HepG2 (cell line): ENCODE measurements at regions of chr18 and their contacts with region 1.

Region 1: GRCh38 chr18:61502472-61502871 is 169.2 kb downstream of the CDH20 start:
- DNase-seq: peak; percentile 21
- ATAC-seq: peak; percentile 84
- H3K4me3 ChIP-seq: no peak overlapping the region
- H3K27ac ChIP-seq: no peak overlapping the region
- H3K4me1 ChIP-seq: no peaks in the 10 kb centered on the region
- H3K27me3 ChIP-seq: peaks cover 0 to 3% of the 10 kb centered on the region in 2 experiments; a peak in 1 of 5 replicates
- CTCF ChIP-seq: peak; percentile 73
- EP300 ChIP-seq: no peak
- POLR2A ChIP-seq: no peak
- RAD21 ChIP-seq: 0 out of 2 replicates have a peak, but pooled peaks have one; percentile 15

Region 2: DNA sequence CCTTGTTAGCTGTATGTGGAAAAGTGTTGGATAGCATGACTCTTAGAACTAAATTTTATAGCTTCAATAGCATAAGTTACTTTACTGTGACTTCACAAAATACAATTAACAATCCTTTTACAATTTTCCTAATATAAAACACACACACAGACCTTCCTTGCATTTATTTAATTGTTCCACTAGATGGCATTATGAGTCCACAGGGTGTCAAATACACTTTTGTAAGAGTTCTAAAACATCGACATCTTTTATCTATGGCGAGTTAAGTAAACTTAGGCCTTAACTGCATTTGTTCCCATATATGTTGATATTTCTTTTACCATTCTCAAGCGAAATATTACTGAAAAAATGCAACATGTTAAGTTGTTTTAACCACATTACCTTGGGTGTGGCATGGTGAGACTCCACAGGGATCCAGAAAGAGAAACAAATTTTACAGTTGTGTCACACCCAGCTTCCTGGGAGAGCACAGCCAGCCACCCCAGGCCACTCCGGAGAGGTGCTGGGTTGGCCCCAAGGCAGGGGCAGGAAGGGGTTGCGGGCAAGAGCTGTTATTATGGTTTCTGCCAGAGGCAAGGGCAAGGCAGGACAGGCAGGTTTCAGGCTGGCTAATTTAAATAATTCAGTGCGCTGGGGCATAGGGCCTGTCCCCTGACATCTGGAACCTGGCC is 817.5 kb before region 1 on chr18:
- CTCF ChIA-PET with region 1: no interaction called
- POLR2A ChIA-PET with region 1: no interaction called
- in situ Hi-C with region 1: loop called (anchors 10 kb)
- intact Hi-C with region 1: loop called (anchors 2 kb)
- DNase-seq: peak; percentile 2
- ATAC-seq: peak; percentile 38; the same call in 1 of the 3 replicates
- H3K4me3 ChIP-seq: no peak overlapping the region
- H3K27ac ChIP-seq: no peak overlapping the region
- H3K4me1 ChIP-seq: no peaks in the 10 kb centered on the region
- H3K27me3 ChIP-seq: no peaks in the 10 kb centered on the region
- CTCF ChIP-seq: peak; percentile 51
- EP300 ChIP-seq: no peak
- POLR2A ChIP-seq: no peak
- RAD21 ChIP-seq: no peak

Region 3: DNA sequence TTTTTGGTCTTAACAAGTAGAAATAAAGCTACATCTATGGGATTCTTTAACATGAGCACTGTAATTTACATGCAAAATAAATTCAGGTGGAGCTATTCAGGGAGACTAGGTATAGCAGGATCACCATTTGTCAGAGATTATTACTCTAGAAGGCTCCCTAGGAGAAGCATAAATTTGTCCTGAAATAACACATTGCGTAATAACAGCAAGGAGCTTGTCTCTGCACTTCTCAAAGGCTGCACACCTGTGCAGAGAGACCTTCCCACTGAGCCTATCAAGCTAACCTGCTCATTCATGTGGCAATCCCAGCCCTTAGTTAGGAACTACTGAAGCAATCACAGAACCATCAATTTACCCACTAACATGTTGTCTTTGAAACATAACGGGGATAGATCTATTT is 692.5 kb before region 1 on chr18:
- CTCF ChIA-PET with region 1: interaction called, 3 read pairs
- POLR2A ChIA-PET with region 1: no interaction called
- in situ Hi-C with region 1: loop called (anchors 25 kb)
- intact Hi-C with region 1: no loop called
- DNase-seq: no peak
- ATAC-seq: no peak
- H3K4me3 ChIP-seq: no peak overlapping the region
- H3K27ac ChIP-seq: no peak overlapping the region
- H3K4me1 ChIP-seq: no peaks in the 10 kb centered on the region
- H3K27me3 ChIP-seq: no peaks in the 10 kb centered on the region; a peak in 1 of 5 replicates
- CTCF ChIP-seq: no peak
- EP300 ChIP-seq: no peak
- POLR2A ChIP-seq: no peak
- RAD21 ChIP-seq: no peak

Region 4: GRCh38 chr18:61085761-61086160 is 416.7 kb before region 1 on chr18:
- CTCF ChIA-PET with region 1: interaction called, 8 read pairs
- POLR2A ChIA-PET with region 1: no interaction called
- in situ Hi-C with region 1: no loop called
- intact Hi-C with region 1: loop called (anchors 2 kb)
- DNase-seq: no peak
- ATAC-seq: no peak
- H3K4me3 ChIP-seq: no peak overlapping the region
- H3K27ac ChIP-seq: no peak overlapping the region
- H3K4me1 ChIP-seq: no peaks in the 10 kb centered on the region
- H3K27me3 ChIP-seq: no peaks in the 10 kb centered on the region
- CTCF ChIP-seq: no peak
- EP300 ChIP-seq: no peak
- POLR2A ChIP-seq: no peak
- RAD21 ChIP-seq: no peak

Region 5: GRCh38 chr18:61322265-61322873 is 180.1 kb before region 1 on chr18:
- CTCF ChIA-PET with region 1: interaction called, 41 read pairs
- POLR2A ChIA-PET with region 1: no interaction called
- in situ Hi-C with region 1: loop called (anchors 5 kb)
- intact Hi-C with region 1: loop called (anchors 1 kb)
- DNase-seq: peak; percentile 42
- ATAC-seq: peak; percentile 100
- H3K4me3 ChIP-seq: no peak overlapping the region
- H3K27ac ChIP-seq: no peak overlapping the region
- H3K4me1 ChIP-seq: no peaks in the 10 kb centered on the region
- H3K27me3 ChIP-seq: no peaks in the 10 kb centered on the region
- CTCF ChIP-seq: peak; percentile 88
- EP300 ChIP-seq: no peak
- POLR2A ChIP-seq: no peak
- RAD21 ChIP-seq: peak; percentile 57

Region 6: GRCh38 chr18:61743775-61744531 is 241.5 kb after region 1 on chr18:
- CTCF ChIA-PET with region 1: no interaction called
- POLR2A ChIA-PET with region 1: no interaction called
- in situ Hi-C with region 1: no loop called
- intact Hi-C with region 1: no loop called
- DNase-seq: no peak
- ATAC-seq: no peak
- H3K4me3 ChIP-seq: no peak overlapping the region
- H3K27ac ChIP-seq: no peak overlapping the region
- H3K4me1 ChIP-seq: no peaks in the 10 kb centered on the region
- H3K27me3 ChIP-seq: no peaks in the 10 kb centered on the region; a peak in 1 of 5 replicates
- CTCF ChIP-seq: no peak
- EP300 ChIP-seq: no peak
- POLR2A ChIP-seq: no peak
- RAD21 ChIP-seq: no peak

Region 7: GRCh38 chr18:62018034-62018758 is 515.7 kb after region 1 on chr18:
- CTCF ChIA-PET with region 1: no interaction called
- POLR2A ChIA-PET with region 1: no interaction called
- in situ Hi-C with region 1: no loop called
- intact Hi-C with region 1: no loop called
- DNase-seq: no peak
- ATAC-seq: no peak
- H3K4me3 ChIP-seq: no peak overlapping the region
- H3K27ac ChIP-seq: no peak overlapping the region
- H3K4me1 ChIP-seq: no peaks in the 10 kb centered on the region
- H3K27me3 ChIP-seq: peaks cover 0 to 1% of the 10 kb centered on the region in 2 experiments; a peak in 2 of 5 replicates
- CTCF ChIP-seq: no peak
- EP300 ChIP-seq: no peak
- POLR2A ChIP-seq: no peak
- RAD21 ChIP-seq: no peak